ENCODE measurements at regions of chr1 and their contacts with region 1.

Region 1: GRCh38 chr1:159214149-159214760 is 9.6 kb downstream of the ACKR1 start:
- DNase-seq: peak; percentile 64
- ATAC-seq: peak; percentile 73
- H3K4me3 ChIP-seq: no peak overlapping the region
- H3K4me3 Mint-ChIP-seq: no peak overlapping the region
- H3K27ac ChIP-seq: no peak overlapping the region
- H3K27ac Mint-ChIP-seq: no peak overlapping the region
- H3K4me1 ChIP-seq: peaks cover 0 to 3% of the 10 kb centered on the region in 2 donors
- H3K4me1 Mint-ChIP-seq: peaks cover 2% of the 10 kb centered on the region
- H3K27me3 ChIP-seq: peaks cover 0 to 25% (median 7%) of the 10 kb centered on the region in 4 experiments
- H3K27me3 Mint-ChIP-seq: peaks cover 54% of the 10 kb centered on the region
- CTCF ChIP-seq: peak; percentile 98

Region 2: GRCh38 chr1:159132271-159132881 is 81.9 kb before region 1 on chr1:
- CTCF ChIA-PET with region 1: interaction called, 240 read pairs
- POLR2A ChIA-PET with region 1: no interaction called
- intact Hi-C with region 1: no loop called
- DNase-seq: peak; percentile 71
- ATAC-seq: no peak
- H3K4me3 ChIP-seq: no peak overlapping the region
- H3K4me3 Mint-ChIP-seq: no peak overlapping the region
- H3K27ac ChIP-seq: no peak overlapping the region
- H3K27ac Mint-ChIP-seq: no peak overlapping the region
- H3K4me1 ChIP-seq: no peaks in the 10 kb centered on the region
- H3K4me1 Mint-ChIP-seq: peaks cover 2% of the 10 kb centered on the region
- H3K27me3 ChIP-seq: no peaks in the 10 kb centered on the region
- H3K27me3 Mint-ChIP-seq: no peaks in the 10 kb centered on the region
- CTCF ChIP-seq: peak; percentile 90

Region 3: GRCh38 chr1:159161001-159161718 is 53.1 kb before region 1 on chr1:
- CTCF ChIA-PET with region 1: interaction called, 150 read pairs
- POLR2A ChIA-PET with region 1: no interaction called
- intact Hi-C with region 1: loop called (anchors 1 kb)
- DNase-seq: peak; percentile 82
- ATAC-seq: peak; percentile 98
- H3K4me3 ChIP-seq: no peak overlapping the region
- H3K4me3 Mint-ChIP-seq: no peak overlapping the region
- H3K27ac ChIP-seq: no peak overlapping the region
- H3K27ac Mint-ChIP-seq: no peak overlapping the region
- H3K4me1 ChIP-seq: peaks cover 4 to 6% of the 10 kb centered on the region in 2 donors
- H3K4me1 Mint-ChIP-seq: peaks cover 7% of the 10 kb centered on the region
- H3K27me3 ChIP-seq: no peaks in the 10 kb centered on the region
- H3K27me3 Mint-ChIP-seq: no peaks in the 10 kb centered on the region
- CTCF ChIP-seq: peak; percentile 96

Region 4: DNA sequence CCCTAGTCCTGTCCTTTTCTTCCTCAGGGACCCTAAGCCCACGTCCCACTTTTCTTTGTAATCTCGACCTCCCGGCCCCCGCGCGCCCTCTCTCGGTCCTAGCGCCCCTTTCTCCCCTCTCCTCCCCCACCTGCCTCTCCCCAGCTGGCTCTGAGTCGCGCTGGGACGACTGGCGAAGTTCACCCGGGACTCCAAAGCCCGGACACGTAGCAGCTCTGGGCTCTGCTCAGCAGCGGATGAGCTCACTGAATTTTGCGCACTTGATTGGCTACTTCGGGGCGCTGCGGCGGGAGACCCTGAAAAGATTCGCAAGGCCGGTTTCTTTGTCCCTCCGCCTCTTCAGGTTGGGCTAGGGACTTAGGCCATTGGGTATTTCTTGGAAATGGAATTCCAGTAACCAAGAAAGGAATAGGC is 25.9 kb before region 1 on chr1:
- CTCF ChIA-PET with region 1: interaction called, 11 read pairs
- POLR2A ChIA-PET with region 1: no interaction called
- intact Hi-C with region 1: no loop called
- DNase-seq: peak; percentile 81
- ATAC-seq: peak; percentile 98
- H3K4me3 ChIP-seq: peak overlapping the region in 4 of 5 experiments; percentile 59 to 71 (median 64)
- H3K4me3 Mint-ChIP-seq: peak overlapping the region; percentile 97
- H3K27ac ChIP-seq: peak overlapping the region; percentile 49 to 74
- H3K27ac Mint-ChIP-seq: peak overlapping the region; percentile 87
- H3K4me1 ChIP-seq: peaks cover 19 to 21% of the 10 kb centered on the region in 2 donors
- H3K4me1 Mint-ChIP-seq: peaks cover 48% of the 10 kb centered on the region
- H3K27me3 ChIP-seq: peaks cover 0 to 2% (median 0%) of the 10 kb centered on the region in 4 experiments
- H3K27me3 Mint-ChIP-seq: peaks cover 12% of the 10 kb centered on the region
- CTCF ChIP-seq: no peak

Region 5: DNA sequence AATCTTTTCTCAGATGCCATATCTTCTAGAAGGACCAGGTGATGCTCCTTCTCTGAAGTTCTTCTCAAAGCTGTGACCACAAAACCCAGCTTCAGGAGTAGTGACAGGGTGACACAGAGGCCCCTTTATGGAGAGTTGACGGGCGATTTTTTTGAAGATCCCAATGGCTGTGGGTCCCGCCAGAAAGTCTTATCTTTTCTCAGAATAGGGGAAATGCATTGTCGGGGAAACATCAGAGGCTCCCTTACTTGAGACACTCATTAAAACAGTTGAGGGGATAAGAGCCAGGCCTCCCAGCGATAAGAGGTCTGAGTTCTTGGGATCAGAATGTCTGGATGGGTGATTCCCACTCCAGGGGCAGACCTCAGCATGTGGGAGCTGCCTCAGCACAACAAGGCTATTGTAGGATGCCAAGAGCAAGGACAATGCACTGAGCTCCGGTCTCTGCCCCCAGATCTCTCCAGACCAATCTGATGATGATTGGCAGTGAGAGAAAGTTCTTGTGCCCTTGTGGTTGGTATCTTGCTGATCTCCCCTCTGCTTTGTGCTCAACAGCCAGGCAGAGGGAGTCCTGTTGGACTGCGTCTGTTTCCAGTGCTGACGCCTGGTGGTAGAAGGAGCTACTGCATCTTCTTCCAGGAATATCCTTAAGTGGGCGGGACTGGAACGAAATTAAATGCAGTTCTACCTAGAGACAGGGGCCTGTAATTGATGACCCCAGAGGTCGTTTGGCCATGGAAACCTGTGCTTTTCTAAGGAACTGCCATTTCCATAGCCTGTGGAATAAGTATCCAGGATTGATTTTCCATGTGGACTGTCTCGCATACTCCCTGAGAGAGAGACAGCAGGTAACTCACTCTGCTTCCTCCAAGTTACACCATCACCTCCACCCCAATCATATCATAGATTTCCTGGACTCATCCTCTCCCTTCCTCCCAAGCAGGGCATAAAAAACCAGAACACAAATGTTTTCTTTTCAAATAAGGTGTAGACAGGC is 16.4 kb before region 1 on chr1:
- CTCF ChIA-PET with region 1: interaction called, 102 read pairs
- POLR2A ChIA-PET with region 1: interaction called, 5 read pairs
- intact Hi-C with region 1: no loop called
- DNase-seq: peak; percentile 75
- ATAC-seq: peak; percentile 88
- H3K4me3 ChIP-seq: no peak overlapping the region
- H3K4me3 Mint-ChIP-seq: no peak overlapping the region
- H3K27ac ChIP-seq: no peak overlapping the region
- H3K27ac Mint-ChIP-seq: no peak overlapping the region
- H3K4me1 ChIP-seq: peaks cover 0 to 4% of the 10 kb centered on the region in 2 donors
- H3K4me1 Mint-ChIP-seq: no peaks in the 10 kb centered on the region
- H3K27me3 ChIP-seq: peaks cover 0 to 25% (median 4%) of the 10 kb centered on the region in 4 experiments
- H3K27me3 Mint-ChIP-seq: peaks cover 36% of the 10 kb centered on the region
- CTCF ChIP-seq: peak; percentile 80

Region 6: GRCh38 chr1:159229486-159229885 is 15.2 kb after region 1 on chr1:
- CTCF ChIA-PET with region 1: interaction called, 60 read pairs
- POLR2A ChIA-PET with region 1: no interaction called
- intact Hi-C with region 1: no loop called
- DNase-seq: no peak
- ATAC-seq: no peak
- H3K4me3 ChIP-seq: no peak overlapping the region
- H3K4me3 Mint-ChIP-seq: no peak overlapping the region
- H3K27ac ChIP-seq: no peak overlapping the region
- H3K27ac Mint-ChIP-seq: no peak overlapping the region
- H3K4me1 ChIP-seq: no peaks in the 10 kb centered on the region
- H3K4me1 Mint-ChIP-seq: no peaks in the 10 kb centered on the region
- H3K27me3 ChIP-seq: peaks cover 0 to 9% (median 5%) of the 10 kb centered on the region in 4 experiments
- H3K27me3 Mint-ChIP-seq: peaks cover 29% of the 10 kb centered on the region
- CTCF ChIP-seq: no peak

Region 7: GRCh38 chr1:159239551-159240220 is 25.4 kb after region 1 on chr1:
- CTCF ChIA-PET with region 1: interaction called, 15 read pairs
- POLR2A ChIA-PET with region 1: no interaction called
- intact Hi-C with region 1: no loop called
- DNase-seq: no peak
- ATAC-seq: no peak
- H3K4me3 ChIP-seq: no peak overlapping the region
- H3K4me3 Mint-ChIP-seq: no peak overlapping the region
- H3K27ac ChIP-seq: no peak overlapping the region
- H3K27ac Mint-ChIP-seq: no peak overlapping the region
- H3K4me1 ChIP-seq: no peaks in the 10 kb centered on the region
- H3K4me1 Mint-ChIP-seq: no peaks in the 10 kb centered on the region
- H3K27me3 ChIP-seq: peaks cover 0 to 5% (median 2%) of the 10 kb centered on the region in 4 experiments
- H3K27me3 Mint-ChIP-seq: peaks cover 21% of the 10 kb centered on the region
- CTCF ChIP-seq: no peak